ENCODE measurements at regions of chr20 and their contacts with region 1.

Region 1: GRCh38 chr20:44187051-44187762 is at the start of gene JPH2:
- DNase-seq: peak in 1 of 42 donors; percentile 39

Region 2: GRCh38 chr20:43658069-43658722 is 529.0 kb before region 1 on chr20:
- intact Hi-C with region 1: no loop called
- DNase-seq: peak in 1 of 42 donors; percentile 18

Region 3: GRCh38 chr20:44115762-44116644 is 71.2 kb before region 1 on chr20:
- intact Hi-C with region 1: loop called (anchors 2 kb)
- DNase-seq: peak in 1 of 42 donors; percentile 18

Region 4: DNA sequence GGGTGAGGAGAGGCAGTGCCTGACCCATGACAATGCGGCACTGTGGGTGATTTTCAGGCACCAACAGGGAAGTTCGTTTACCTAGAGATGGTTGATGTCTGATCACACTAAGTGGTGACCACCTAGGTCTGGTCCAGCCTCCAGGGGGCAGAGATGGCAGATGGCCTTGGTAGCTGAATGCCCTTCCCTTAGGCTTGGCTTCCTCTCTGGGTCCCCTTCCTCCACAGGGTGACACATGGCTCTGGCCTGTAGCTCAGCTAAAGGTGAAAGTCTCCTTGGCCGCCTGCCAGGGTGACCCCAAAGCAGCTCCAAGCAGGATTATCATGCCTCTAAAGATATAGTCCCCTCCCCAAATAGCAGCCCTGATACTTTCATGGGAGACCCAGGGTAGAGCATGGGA is 66.3 kb after region 1 on chr20:
- intact Hi-C with region 1: no loop called
- DNase-seq: no peak

Region 5: DNA sequence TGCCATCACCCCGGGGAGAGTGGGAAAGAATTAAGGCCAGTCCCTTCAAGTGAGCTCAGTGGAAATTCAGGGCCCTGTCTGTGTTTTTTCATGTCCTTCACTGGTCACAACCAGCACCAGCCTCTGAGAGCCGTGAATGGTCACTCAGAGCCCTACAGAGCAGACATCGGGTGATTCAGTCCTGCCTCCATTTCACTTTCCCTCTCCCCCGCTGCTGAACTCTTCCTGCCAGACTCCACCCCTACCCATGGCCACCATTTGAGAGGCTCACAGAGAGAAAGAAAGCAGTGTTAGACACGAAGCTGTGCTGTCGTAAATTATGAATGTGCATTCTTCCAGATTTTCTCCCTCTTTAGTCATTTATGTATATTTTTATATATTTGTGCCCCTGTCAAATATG is 155.0 kb after region 1 on chr20:
- intact Hi-C with region 1: no loop called
- DNase-seq: peak in 1 of 42 donors; percentile 2

Region 6: DNA sequence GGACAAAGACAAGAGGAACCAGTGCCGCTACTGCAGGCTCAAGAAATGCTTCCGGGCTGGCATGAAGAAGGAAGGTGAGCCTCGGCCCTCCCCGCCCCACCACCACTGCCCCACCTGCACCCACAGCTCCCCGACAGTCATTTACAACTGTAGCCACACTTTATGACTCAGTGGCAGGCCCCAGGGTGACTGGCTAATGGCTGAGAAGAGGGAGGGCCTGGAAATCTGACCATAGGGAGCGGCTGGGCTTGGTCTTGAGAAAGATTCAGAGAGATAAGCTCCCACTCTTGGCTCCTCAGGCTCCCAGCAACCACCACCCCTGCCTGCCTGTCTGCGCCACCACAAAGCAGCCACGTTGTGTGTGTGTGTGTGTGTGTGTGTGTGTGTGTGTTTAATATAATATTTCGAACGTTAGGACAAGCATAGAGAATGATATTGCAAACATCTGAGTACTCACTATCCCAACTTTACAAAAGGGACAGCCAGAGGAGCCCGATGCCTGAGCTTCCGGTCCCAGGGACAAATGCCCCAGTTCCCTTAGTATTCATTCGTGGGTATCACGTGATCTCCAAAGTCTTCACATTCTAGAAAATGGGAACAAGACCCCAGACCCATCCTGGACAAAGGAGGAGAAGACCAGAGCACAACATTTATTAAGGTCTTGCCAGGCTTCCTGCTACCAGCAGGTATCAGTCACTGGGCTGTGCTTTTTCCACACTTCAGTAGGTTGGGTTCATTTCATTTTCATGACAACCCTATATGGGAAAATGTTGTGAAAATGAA is 220.4 kb after region 1 on chr20:
- intact Hi-C with region 1: no loop called
- DNase-seq: no peak

Measured in head of caudate nucleus (tissue), 42 donors.